SK-N-SH (cell line): ENCODE measurements at regions of chr15 and their contacts with region 1.

Region 1: DNA sequence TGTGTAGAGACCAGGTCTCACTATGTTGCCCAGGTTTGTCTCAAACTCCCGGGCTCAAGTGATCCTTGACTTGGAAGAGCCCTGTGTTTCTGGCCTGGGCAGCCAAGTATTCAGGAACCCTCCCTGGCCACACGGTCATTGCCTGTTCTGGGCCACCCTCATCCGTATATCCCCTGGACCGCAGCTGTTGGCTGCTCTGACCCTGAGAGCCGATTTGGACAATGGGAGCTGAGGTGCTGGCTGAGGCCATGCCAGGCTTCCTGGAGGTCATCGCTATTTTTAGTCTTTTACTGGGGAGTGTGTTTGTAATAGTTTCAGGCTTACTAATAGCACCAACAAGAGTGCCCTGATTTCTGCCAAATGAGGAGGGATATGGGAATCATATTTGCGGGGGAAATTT is 60.7 kb downstream of the ADAMTS7 start:
- DNase-seq: no peak
- H3K4me3 ChIP-seq: no peak overlapping the region
- H3K27ac ChIP-seq: peak overlapping the region in 1 of 2 experiments; percentile 45; a peak in 1 of 4 replicates
- H3K4me1 ChIP-seq: peaks cover 0 to 49% of the 10 kb centered on the region in 2 experiments; a peak in 2 of 4 replicates
- H3K27me3 ChIP-seq: no peaks in the 10 kb centered on the region
- CTCF ChIP-seq: no peak
- EP300 ChIP-seq: no peak
- RAD21 ChIP-seq: no peak

Region 2: DNA sequence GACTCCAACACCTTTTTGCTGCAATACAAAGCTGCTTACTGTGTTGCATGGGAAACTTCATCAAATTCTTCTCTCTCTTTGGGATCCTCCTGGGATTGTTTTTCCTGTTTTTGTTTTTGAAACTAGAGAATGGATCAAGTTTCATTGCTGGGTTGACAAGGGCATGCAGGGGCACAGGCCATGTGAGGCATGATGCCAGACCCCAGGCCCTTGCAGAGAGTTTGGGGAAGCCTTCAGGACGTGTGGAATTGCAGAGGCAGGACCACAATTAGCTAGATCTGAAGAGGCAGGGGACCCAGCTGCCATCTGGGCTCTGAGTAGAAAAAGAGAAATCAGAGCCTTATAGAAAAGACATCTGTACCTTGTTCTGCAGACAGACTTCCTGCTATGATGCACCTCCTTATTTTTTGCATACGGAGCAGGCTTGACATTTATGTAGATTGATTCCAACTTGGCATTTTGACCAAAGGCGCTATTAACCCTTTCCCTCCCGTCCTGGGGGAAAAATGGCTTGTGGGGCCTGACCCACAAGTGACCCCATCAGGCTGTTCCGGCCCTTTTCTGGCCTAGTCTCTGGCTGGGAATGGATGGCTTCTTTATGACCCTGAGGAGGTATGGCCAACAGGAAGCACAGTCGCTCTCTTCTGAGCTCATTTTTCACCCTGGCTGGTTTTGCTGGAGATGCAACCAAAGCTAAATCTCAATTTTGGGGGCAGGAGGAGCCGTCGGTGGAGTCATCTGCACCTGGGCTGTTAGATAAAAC is 65.2 kb before region 1 on chr15:
- CTCF ChIA-PET with region 1: interaction called, 6 read pairs
- POLR2A ChIA-PET with region 1: interaction called, 12 read pairs
- DNase-seq: peak; percentile 32
- H3K4me3 ChIP-seq: no peak overlapping the region
- H3K27ac ChIP-seq: peak overlapping the region in 1 of 2 experiments; percentile 93; a peak in 2 of 4 replicates
- H3K4me1 ChIP-seq: peaks cover 0 to 53% of the 10 kb centered on the region in 2 experiments; a peak in 2 of 4 replicates
- H3K27me3 ChIP-seq: peaks cover 6% of the 10 kb centered on the region; the same call in 1 of the 2 replicates
- CTCF ChIP-seq: no peak
- EP300 ChIP-seq: peak in 1 of 2 experiments; percentile 65; a peak in 1 of 4 replicates
- RAD21 ChIP-seq: no peak

Region 3: DNA sequence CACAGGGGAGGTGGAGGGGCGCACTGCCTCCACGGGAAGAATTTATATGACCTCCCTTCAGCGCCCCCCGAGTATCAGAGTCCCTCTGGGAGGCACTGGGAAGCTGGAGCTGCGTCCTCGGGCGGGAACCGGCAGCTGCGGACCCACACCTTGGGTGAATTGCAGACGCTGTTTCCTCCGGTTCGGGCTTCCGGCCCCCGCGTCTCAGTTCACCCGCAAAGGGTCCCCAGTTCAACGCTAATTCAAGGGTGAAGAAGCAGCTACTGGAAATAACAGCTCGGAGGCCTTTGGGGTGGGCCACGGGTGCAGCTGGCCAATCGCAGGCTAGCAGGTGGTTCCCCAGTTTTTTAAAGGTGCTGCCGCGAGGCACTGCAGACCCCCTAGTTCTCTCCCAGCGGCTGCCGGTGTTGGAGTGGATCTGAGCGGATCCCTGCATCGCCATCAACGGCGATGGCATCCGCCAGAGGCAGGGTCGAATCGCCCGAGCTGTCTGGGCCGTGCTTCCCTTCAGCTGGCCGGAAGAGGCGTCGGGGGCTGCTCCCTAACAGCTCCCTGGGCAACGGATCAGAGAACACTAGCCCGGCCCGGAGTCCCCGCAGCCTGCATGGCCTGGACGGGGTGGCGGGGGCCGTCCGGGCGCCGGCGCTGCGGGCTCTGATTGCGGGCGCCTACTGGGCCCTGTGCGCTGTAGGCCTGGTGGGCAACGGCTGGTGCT is 80.1 kb after region 1 on chr15:
- CTCF ChIA-PET with region 1: no interaction called
- POLR2A ChIA-PET with region 1: no interaction called
- DNase-seq: no peak
- H3K4me3 ChIP-seq: no peak overlapping the region
- H3K27ac ChIP-seq: no peak overlapping the region
- H3K4me1 ChIP-seq: peaks cover 0 to 2% of the 10 kb centered on the region in 2 experiments; a peak in 1 of 4 replicates
- H3K27me3 ChIP-seq: no peaks in the 10 kb centered on the region
- CTCF ChIP-seq: no peak
- EP300 ChIP-seq: no peak
- RAD21 ChIP-seq: no peak

Region 4: GRCh38 chr15:78944669-78945407 is 194.3 kb after region 1 on chr15 and contains the start of gene CTSH:
- CTCF ChIA-PET with region 1: no interaction called
- POLR2A ChIA-PET with region 1: no interaction called
- DNase-seq: peak; percentile 94
- H3K4me3 ChIP-seq: peak within 1 kb of the TSS; percentile 49 to 62
- H3K27ac ChIP-seq: no peak within 1 kb of the TSS
- H3K4me1 ChIP-seq: peaks cover 0 to 11% of the 10 kb centered on the region in 2 experiments; a peak in 1 of 4 replicates
- H3K27me3 ChIP-seq: no peaks in the 10 kb centered on the region
- CTCF ChIP-seq: no peak
- EP300 ChIP-seq: no peak
- RAD21 ChIP-seq: no peak
- polyA plus RNA-seq, gene CTSH: 22.7 and 23.0 TPM in 2 replicates